AG04449 (cell line): ENCODE measurements at regions of chr22 and their contacts with region 1.

Region 1: GRCh38 chr22:37043828-37044538 is 7.6 kb upstream of the KCTD17 start:
- DNase-seq: no peak
- H3K4me3 ChIP-seq: no peak overlapping the region
- CTCF ChIP-seq: peak; percentile 62

Region 2: DNA sequence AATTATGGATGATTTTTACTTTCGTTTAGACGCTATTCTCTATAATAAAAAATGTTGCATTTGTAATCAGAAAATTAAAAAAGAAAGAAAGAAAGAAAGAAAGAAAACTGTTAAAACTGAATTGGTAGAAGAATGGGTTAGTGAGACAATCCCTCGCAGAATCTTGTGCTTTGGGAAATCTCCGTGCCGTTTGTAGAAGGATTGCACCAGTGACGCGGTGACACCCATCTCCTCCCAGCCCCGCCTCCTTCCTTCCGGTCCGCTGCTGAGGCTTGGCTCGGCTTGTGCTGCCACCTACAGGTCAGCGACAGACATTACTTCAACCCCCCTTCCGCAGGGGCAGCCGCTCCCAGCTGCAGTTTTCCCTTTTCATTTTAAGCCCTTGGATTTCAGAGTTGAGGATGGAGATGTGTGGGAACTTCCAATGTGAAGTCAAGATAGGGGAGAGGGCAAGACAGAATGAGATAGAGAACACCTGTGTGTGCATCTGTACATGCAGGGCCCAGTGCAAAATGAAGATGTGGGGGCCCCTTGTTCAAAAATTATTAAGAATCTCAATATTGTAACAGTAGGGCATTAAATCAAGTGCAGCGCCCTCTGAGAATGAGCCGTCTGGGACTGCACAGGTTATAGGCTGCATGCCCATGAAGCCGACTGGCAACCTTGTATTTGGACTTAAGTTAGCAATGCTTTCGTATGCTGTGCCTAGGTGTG is 65.9 kb before region 1 on chr22:
- CTCF ChIA-PET with region 1: no interaction called
- POLR2A ChIA-PET with region 1: no interaction called
- DNase-seq: peak; percentile 12
- H3K4me3 ChIP-seq: peak overlapping the region; percentile 51
- CTCF ChIP-seq: peak; percentile 97

Region 3: GRCh38 chr22:37019309-37020125 is 24.5 kb before region 1 on chr22 and contains the starts of genes MPST and TST:
- CTCF ChIA-PET with region 1: interaction called, 46 read pairs
- POLR2A ChIA-PET with region 1: no interaction called
- DNase-seq: no peak
- H3K4me3 ChIP-seq: peak within 1 kb of the TSS; percentile 82
- CTCF ChIP-seq: no peak

Region 4: DNA sequence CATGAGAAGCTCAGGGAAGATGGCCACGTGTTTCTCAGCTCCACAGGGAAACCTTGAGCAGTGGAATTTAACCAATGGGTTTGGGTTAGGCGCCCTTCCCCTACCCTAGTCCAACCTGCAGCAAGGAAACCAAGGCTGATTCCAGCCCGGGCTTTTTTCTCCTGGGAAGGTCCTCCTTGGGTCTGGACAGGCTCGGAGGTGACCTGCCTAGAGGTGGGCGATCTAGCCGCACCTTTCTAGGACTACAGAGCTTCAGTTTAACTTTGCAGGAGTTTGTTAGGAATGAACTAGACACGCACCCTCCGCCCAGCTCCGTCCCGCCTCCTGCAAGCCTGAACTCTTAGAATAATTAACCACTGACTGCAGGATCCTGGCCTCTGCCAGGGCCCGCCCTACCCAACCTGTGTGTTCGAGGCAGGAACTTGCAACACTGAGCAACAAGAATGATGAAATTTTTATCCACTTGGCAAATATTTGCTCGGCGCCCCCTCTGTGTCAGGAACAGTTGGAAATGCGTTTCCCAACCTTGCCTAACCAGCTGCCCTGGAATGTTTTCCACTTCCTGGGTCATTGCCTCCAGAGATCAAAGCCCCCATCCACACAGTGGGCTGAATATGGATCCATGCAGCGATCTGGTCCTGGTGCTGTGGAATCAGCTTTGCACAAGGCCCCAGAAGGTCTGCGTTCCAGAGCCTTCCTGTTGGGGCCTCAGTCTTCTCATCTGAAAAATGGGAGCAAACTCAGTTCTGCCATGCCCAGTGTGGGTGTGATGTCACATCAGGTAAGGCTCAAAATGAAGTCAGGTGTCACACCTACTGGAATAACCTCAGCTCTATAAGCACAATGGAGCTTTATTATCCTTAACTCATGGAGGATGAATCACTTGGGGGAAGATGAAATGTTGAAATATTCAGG is 11.2 kb before region 1 on chr22:
- CTCF ChIA-PET with region 1: interaction called, 78 read pairs
- POLR2A ChIA-PET with region 1: interaction called, 3 read pairs
- DNase-seq: no peak
- H3K4me3 ChIP-seq: no peak overlapping the region
- CTCF ChIP-seq: no peak

Region 5: GRCh38 chr22:37054600-37055365 is 10.8 kb after region 1 on chr22:
- CTCF ChIA-PET with region 1: interaction called, 14 read pairs
- POLR2A ChIA-PET with region 1: no interaction called
- DNase-seq: no peak
- H3K4me3 ChIP-seq: no peak overlapping the region
- CTCF ChIP-seq: no peak